ENCODE measurements at regions of chr16 and their contacts with region 1.

Region 1: DNA sequence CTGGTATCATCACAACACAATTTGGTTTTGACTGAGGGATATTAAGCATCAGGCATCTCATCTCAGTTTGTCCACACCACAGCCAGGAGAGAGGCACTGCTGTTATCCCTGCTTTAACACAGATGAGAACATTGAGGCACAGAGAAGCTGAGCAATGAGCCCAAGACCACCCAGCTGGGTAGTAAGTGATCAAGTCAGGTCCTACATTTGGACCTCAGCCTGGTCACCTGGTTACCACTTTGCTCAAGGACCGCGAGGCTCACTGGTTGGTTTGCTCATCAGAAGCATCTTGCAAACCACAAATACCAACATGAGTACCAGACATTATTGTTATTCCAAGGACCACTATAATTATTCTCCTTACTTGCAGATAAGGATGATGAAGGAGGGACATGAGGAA is 245.5 kb downstream of the CBLN1 start:
- DNase-seq: no peak
- H3K4me3 ChIP-seq: no peak overlapping the region
- H3K27ac ChIP-seq: no peak overlapping the region
- H3K4me1 ChIP-seq: no peaks in the 10 kb centered on the region
- H3K27me3 ChIP-seq: no peaks in the 10 kb centered on the region
- CTCF ChIP-seq: no peak
- EP300 ChIP-seq: no peak
- POLR2A ChIP-seq: no peak

Region 2: DNA sequence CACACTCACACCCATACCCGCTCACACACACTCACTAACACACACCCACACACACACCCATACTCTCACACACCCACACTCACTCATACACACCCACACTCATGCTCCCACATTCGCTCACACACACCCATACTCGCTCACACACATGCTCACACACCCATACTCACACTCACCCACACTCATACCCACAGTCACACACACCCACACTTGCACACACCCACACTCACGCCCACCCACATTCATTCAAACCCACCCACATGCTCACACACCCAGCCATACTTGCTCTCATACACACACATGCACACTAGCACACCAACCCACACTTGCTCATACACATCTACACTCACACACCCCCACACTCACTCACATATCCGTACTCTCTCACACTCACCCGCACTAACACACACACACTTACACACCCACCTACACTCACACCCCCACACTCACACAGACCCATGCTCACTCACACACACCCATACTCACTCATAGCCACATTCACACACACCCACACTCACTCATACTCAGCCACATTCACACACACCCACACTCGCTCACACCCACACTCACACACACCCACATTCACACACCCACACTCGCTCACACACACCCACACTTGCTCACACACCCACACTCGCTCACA is 103.8 kb before region 1 on chr16:
- in situ Hi-C with region 1: no loop called
- intact Hi-C with region 1: no loop called
- DNase-seq: no peak
- H3K4me3 ChIP-seq: no peak overlapping the region
- H3K27ac ChIP-seq: no peak overlapping the region
- H3K4me1 ChIP-seq: no peaks in the 10 kb centered on the region
- H3K27me3 ChIP-seq: no peaks in the 10 kb centered on the region
- CTCF ChIP-seq: no peak
- EP300 ChIP-seq: no peak
- POLR2A ChIP-seq: no peak

Region 3: DNA sequence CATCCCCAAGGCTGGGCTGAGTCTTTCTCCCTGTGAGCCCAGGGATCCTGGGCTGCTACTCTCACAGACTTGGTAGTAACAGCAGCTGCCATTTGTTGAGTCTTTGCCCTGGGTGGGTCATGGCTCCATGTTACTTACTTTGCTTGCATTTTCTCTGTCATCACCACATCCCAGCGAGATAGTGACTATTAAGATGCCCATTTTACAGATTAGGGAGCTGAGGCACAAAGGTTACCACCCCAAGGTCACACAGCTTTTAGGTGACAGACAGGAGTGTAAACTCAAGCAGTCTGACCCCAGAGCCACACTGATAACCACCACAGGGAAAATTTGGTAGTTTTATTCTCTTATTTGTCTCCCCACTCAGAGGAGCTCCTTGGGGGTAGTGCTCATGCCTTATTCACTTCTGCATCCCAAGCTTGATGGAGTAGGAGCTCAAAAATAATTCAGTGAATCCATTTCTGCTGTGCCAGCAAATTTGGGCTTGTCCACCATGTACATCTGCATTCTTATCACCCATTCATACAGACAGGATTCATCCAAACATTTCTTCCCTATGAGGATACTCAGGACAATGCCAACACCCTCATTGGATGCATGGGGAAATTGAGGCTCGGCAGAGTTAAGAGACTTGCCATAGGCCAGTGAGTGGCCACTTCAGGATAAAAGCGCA is 17.7 kb before region 1 on chr16:
- in situ Hi-C with region 1: no loop called
- intact Hi-C with region 1: loop called (anchors 1 kb)
- DNase-seq: no peak
- H3K4me3 ChIP-seq: no peak overlapping the region
- H3K27ac ChIP-seq: no peak overlapping the region
- H3K4me1 ChIP-seq: peaks cover 0 to 10% (median 4%) of the 10 kb centered on the region in 4 donors
- H3K27me3 ChIP-seq: peaks cover 7% of the 10 kb centered on the region
- CTCF ChIP-seq: no peak
- EP300 ChIP-seq: no peak
- POLR2A ChIP-seq: no peak